ENCODE measurements at regions of chr22 and their contacts with region 1.

Region 1: GRCh38 chr22:35231585-35232084 is 25.7 kb upstream of the HMGXB4 start:
- DNase-seq: peak; percentile 68
- H3K4me3 ChIP-seq: no peak overlapping the region
- H3K27ac ChIP-seq: no peak overlapping the region
- H3K4me1 ChIP-seq: no peaks in the 10 kb centered on the region
- H3K27me3 ChIP-seq: no peaks in the 10 kb centered on the region
- CTCF ChIP-seq: peak; percentile 97 to 98

Region 2: GRCh38 chr22:33519071-33519973 is 1712.3 kb before region 1 on chr22:
- CTCF ChIA-PET with region 1: no interaction called
- dilution Hi-C with region 1: no loop called
- in situ Hi-C with region 1: no loop called
- intact Hi-C with region 1: loop called (anchors 2 kb)
- DNase-seq: peak; percentile 18
- H3K4me3 ChIP-seq: no peak overlapping the region
- H3K27ac ChIP-seq: no peak overlapping the region
- H3K4me1 ChIP-seq: no peaks in the 10 kb centered on the region
- H3K27me3 ChIP-seq: no peaks in the 10 kb centered on the region
- CTCF ChIP-seq: peak; percentile 21 to 36

Region 3: GRCh38 chr22:34414484-34415440 is 816.9 kb before region 1 on chr22:
- CTCF ChIA-PET with region 1: interaction called, 8 read pairs
- dilution Hi-C with region 1: no loop called
- in situ Hi-C with region 1: no loop called
- intact Hi-C with region 1: loop called (anchors 1 kb)
- DNase-seq: peak; percentile 73
- H3K4me3 ChIP-seq: no peak overlapping the region
- H3K27ac ChIP-seq: no peak overlapping the region
- H3K4me1 ChIP-seq: no peaks in the 10 kb centered on the region
- H3K27me3 ChIP-seq: no peaks in the 10 kb centered on the region
- CTCF ChIP-seq: peak; percentile 75 to 83

Region 4: GRCh38 chr22:35023692-35024363 is 207.8 kb before region 1 on chr22:
- CTCF ChIA-PET with region 1: no interaction called
- dilution Hi-C with region 1: no loop called
- in situ Hi-C with region 1: no loop called
- intact Hi-C with region 1: loop called (anchors 1 kb)
- DNase-seq: peak; percentile 32
- H3K4me3 ChIP-seq: no peak overlapping the region
- H3K27ac ChIP-seq: no peak overlapping the region
- H3K4me1 ChIP-seq: no peaks in the 10 kb centered on the region
- H3K27me3 ChIP-seq: no peaks in the 10 kb centered on the region
- CTCF ChIP-seq: peak; percentile 39 to 75

Region 5: GRCh38 chr22:35043252-35043931 is 188.2 kb before region 1 on chr22:
- CTCF ChIA-PET with region 1: interaction called, 3 read pairs
- dilution Hi-C with region 1: no loop called
- in situ Hi-C with region 1: no loop called
- intact Hi-C with region 1: loop called (anchors 2 kb)
- DNase-seq: no peak
- H3K4me3 ChIP-seq: no peak overlapping the region
- H3K27ac ChIP-seq: no peak overlapping the region
- H3K4me1 ChIP-seq: no peaks in the 10 kb centered on the region
- H3K27me3 ChIP-seq: no peaks in the 10 kb centered on the region
- CTCF ChIP-seq: no peak

Region 6: DNA sequence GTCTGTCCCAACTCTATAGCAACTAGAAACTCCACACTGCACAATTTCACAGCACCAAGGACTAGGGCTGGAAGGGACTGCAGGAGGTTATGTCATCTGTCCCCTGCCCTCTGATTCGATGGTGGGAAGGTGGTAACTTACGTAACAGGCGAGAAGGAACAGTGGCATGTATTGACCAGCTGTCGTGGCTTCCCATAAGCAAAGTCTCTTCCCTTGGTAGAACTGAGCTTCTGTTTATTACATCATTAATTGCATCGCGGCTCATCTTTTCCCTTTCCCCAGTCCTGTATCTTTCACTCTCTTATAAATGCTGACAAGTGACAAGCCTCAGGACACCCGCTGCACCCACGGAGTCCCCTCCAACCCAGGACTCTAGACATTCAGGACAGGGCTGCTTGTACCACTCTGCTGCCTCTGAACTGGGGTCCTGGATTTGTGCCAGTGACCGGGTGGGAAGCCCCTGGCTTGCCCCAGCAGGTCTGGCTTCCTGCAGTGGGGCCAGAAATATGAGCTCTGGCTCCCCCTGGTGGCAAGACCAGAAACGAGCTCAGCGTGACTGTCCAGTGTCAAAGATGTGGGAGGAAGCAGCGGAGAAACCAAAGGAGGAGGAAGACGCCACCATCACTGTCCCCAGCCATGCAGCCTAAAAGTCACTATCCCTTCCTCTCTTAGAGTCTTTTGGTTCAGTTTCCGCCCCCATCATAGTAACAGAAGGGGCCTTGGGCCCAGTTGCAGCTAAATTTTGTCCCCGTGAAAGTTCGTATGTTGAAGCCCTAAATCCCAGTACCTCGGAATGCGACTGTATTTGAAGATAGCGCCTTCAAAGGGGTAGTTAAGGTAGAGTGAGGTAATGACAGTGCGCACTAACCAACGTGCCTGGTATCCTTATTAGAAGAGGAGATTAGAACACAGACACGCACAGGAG is 81.2 kb before region 1 on chr22:
- CTCF ChIA-PET with region 1: interaction called, 23 read pairs
- dilution Hi-C with region 1: loop called (anchors 5 kb)
- in situ Hi-C with region 1: no loop called
- intact Hi-C with region 1: loop called (anchors 1 kb)
- DNase-seq: peak; percentile 34
- H3K4me3 ChIP-seq: no peak overlapping the region
- H3K27ac ChIP-seq: no peak overlapping the region
- H3K4me1 ChIP-seq: no peaks in the 10 kb centered on the region
- H3K27me3 ChIP-seq: no peaks in the 10 kb centered on the region
- CTCF ChIP-seq: peak; percentile 62 to 77

Measured in mammary epithelial cell (primary cell).